Activated naive CD4-positive, alpha-beta T cell treated with anti-CD3 and anti-CD28 coated beads for 36 hours (primary cell): ENCODE measurements at regions of chr3 and their contacts with region 1.

Region 1: DNA sequence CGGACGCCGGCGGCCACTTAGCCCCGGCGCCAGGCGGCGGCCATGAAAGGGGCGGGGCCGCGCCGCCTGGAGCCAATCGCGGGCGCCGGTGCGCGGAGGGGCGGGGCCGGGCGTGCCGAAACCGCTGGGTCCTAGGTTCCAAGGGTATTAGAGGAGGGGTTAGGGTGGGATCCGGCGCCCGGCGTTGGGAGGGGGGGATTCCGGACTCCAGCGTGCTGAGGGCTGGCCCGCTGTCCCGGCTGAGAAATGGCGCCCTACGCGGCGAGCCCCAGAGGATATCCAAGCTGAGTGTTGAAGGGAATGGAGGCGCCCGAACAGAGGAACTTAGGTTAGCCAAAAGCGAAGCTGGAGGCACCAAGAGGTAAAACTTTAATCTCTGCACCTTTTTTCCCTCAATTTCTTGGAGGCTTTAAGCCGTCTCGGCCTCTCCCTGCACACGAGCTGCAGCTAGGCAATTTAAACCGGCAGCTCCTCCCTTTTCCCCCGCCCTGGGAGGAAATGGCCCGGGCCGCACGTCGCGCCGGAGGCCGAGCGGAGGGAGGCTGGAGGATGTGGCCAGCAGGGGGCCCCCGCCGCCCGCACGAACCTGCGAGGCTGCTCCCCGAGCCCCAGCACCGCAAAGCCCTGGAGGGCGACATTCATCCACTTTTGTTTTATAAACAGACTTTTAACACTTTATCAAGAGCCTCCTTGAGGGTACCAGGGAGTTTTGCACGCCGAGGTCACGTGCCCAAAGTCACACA is at the start of gene XXYLT1:
- DNase-seq: peak; percentile 95
- H3K4me3 Mint-ChIP-seq: peak within 1 kb of the TSS; percentile 83
- H3K27ac Mint-ChIP-seq: no peak within 1 kb of the TSS
- H3K4me1 Mint-ChIP-seq: peaks cover 20% of the 10 kb centered on the region
- H3K27me3 Mint-ChIP-seq: no peaks in the 10 kb centered on the region
- total RNA-seq, gene XXYLT1: 1.8 to 2.5 TPM

Region 2: DNA sequence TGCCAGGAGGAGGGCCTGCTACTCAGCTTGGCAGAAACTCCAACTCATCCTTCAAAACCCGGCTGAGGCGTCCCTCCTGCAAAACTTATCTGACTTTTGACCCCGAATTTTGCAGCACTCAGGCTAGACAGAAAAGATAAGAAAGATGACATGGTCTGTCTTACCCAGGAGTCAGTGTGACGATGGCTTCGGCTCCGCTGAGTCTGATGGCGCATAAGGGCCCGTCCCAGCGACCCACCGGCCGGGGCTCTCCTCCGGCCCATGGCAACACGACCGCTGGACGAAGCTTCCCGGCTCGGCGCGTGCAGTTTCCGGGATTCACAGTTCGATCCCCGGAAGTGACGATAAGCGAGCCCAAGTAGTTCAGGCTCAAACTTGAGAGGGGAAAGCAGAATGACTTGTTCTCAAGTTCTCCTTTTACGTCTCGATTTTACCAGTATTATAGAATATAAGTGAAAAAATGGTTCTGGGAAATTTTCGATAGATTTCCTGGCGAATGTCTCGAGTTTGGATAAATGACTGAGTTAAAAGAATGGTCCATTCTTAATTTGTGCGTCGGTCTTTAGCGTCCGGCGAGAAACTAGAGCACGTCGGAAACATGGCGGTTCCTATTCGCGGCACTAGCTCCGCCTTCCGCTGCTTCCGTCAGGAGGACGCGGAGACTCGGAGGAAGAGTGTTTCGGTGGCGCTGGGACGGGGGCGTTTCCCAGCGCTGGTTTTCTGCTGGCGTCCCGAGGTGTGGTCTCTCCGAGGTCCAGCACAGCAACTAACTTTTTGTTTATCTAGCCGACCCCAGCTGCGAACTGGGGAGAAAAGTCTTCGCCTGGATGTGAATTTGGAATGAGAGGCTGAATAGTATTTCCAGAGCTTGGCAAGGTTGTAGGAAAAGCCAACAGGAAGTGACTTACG is 599.1 kb before region 1 on chr3 and contains the start of gene LSG1:
- CTCF ChIA-PET with region 1: interaction called, 16 read pairs
- intact Hi-C with region 1: no loop called
- DNase-seq: peak; percentile 94
- H3K4me3 Mint-ChIP-seq: peak within 1 kb of the TSS; percentile 99
- H3K27ac Mint-ChIP-seq: peak within 1 kb of the TSS; percentile 97
- H3K4me1 Mint-ChIP-seq: peaks cover 55% of the 10 kb centered on the region
- H3K27me3 Mint-ChIP-seq: no peaks in the 10 kb centered on the region
- total RNA-seq, gene LSG1: 26.4 to 27.0 TPM

Region 3: GRCh38 chr3:195442573-195443390 is 171.5 kb after region 1 on chr3 and contains the start of gene ACAP2:
- CTCF ChIA-PET with region 1: interaction called, 21 read pairs
- intact Hi-C with region 1: loop called (anchors 1 kb)
- DNase-seq: peak; percentile 99
- H3K4me3 Mint-ChIP-seq: peak within 1 kb of the TSS; percentile 93
- H3K27ac Mint-ChIP-seq: peak within 1 kb of the TSS; percentile 89
- H3K4me1 Mint-ChIP-seq: peaks cover 45% of the 10 kb centered on the region
- H3K27me3 Mint-ChIP-seq: no peaks in the 10 kb centered on the region
- total RNA-seq, gene ACAP2: 37.9 to 42.1 TPM

Region 4: GRCh38 chr3:195522254-195523023 is 251.2 kb after region 1 on chr3:
- CTCF ChIA-PET with region 1: interaction called, 71 read pairs
- intact Hi-C with region 1: loop called (anchors 1 kb)
- DNase-seq: no peak
- H3K4me3 Mint-ChIP-seq: no peak overlapping the region
- H3K27ac Mint-ChIP-seq: peak overlapping the region; percentile 69
- H3K4me1 Mint-ChIP-seq: peaks cover 50% of the 10 kb centered on the region
- H3K27me3 Mint-ChIP-seq: no peaks in the 10 kb centered on the region

Region 5: GRCh38 chr3:195748661-195749060 is 477.4 kb after region 1 on chr3:
- CTCF ChIA-PET with region 1: no interaction called
- intact Hi-C with region 1: loop called (anchors 10 kb)
- DNase-seq: no peak
- H3K4me3 Mint-ChIP-seq: no peak overlapping the region
- H3K27ac Mint-ChIP-seq: no peak overlapping the region
- H3K4me1 Mint-ChIP-seq: peaks cover 10% of the 10 kb centered on the region
- H3K27me3 Mint-ChIP-seq: no peaks in the 10 kb centered on the region

Region 6: DNA sequence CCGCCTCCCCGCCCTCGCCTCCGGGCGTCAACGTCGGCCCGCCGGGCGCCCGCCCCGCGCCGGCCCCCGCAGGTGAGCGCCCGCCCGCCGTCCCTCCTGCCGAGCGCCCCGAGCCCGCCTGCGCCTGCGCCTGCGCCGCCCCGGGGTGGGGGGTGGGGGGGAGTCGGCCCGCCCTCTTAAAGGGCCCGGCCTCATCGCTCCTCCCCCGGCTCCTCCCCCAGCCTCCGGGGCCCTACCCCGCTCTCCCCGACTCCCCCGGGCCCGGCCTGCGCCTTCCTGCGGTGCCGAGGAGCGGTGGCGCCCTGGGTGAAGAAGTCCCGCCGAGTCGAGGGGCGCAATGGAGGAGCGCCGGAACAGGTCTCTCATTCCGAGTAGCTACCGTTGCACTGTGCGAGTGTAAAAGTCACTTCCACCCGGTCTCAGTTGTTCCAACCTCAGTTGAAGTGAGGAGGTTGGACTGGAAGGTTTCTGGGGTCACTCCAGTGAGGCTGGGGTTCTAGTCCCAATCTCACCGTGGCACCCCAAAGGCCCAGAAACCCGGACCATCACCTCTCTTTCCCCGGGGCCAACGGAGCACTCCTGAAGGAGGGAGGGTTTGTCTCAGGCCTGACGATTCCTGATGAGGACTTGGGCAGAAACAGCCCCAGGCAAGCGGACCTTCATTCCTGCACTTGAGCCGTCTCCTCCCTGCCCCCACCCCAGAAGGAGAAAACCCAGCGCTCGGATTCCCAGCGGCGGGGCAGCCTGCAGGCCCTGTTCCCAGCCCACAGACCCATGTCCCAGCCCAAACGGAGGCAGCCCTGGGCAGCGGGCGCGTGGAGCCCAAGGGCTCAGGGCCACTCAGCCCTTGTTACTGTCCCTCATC is 638.6 kb after region 1 on chr3:
- CTCF ChIA-PET with region 1: no interaction called
- intact Hi-C with region 1: loop called (anchors 2 kb)
- DNase-seq: peak; percentile 89
- H3K4me3 Mint-ChIP-seq: peak overlapping the region; percentile 70
- H3K27ac Mint-ChIP-seq: no peak overlapping the region
- H3K4me1 Mint-ChIP-seq: peaks cover 33% of the 10 kb centered on the region
- H3K27me3 Mint-ChIP-seq: no peaks in the 10 kb centered on the region

Region 7: GRCh38 chr3:195921334-195921791 is 650.1 kb after region 1 on chr3:
- CTCF ChIA-PET with region 1: no interaction called
- intact Hi-C with region 1: no loop called
- DNase-seq: no peak
- H3K4me3 Mint-ChIP-seq: no peak overlapping the region
- H3K27ac Mint-ChIP-seq: no peak overlapping the region
- H3K4me1 Mint-ChIP-seq: peaks cover 2% of the 10 kb centered on the region
- H3K27me3 Mint-ChIP-seq: no peaks in the 10 kb centered on the region